Right lobe of liver (tissue), 6 donors: ENCODE measurements at regions of chr11 and their contacts with region 1.

Region 1: GRCh38 chr11:64854534-64855429 is 10.3 kb upstream of the CDC42BPG start:
- DNase-seq: peak in 1 of 3 donors; percentile 80
- ATAC-seq: peak; percentile 34 to 77 (median 52)
- H3K4me3 ChIP-seq: no peak overlapping the region
- H3K27ac ChIP-seq: peak overlapping the region in 1 of 3 donors; percentile 31
- H3K4me1 ChIP-seq: peaks cover 2 to 16% (median 6%) of the 10 kb centered on the region in 4 donors
- H3K27me3 ChIP-seq: no peaks in the 10 kb centered on the region
- CTCF ChIP-seq: no peak
- POLR2A ChIP-seq: no peak

Region 2: GRCh38 chr11:64894070-64894796 is 39.5 kb after region 1 on chr11:
- intact Hi-C with region 1: loop called in 1 of 2 experiments (anchors 5 kb)
- DNase-seq: peak; percentile 91 to 93 (median 92)
- ATAC-seq: peak; percentile 57 to 66 (median 62)
- H3K4me3 ChIP-seq: peak overlapping the region in 2 of 3 donors; percentile 91
- H3K27ac ChIP-seq: peak overlapping the region in 2 of 3 donors; percentile 90 to 95
- H3K4me1 ChIP-seq: peaks cover 0 to 30% (median 11%) of the 10 kb centered on the region in 4 donors
- H3K27me3 ChIP-seq: no peaks in the 10 kb centered on the region
- CTCF ChIP-seq: peak; percentile 87 to 93 (median 88)
- POLR2A ChIP-seq: no peak

Region 3: GRCh38 chr11:64960719-64961118 is 105.9 kb after region 1 on chr11:
- intact Hi-C with region 1: no loop called
- DNase-seq: no peak
- ATAC-seq: no peak
- H3K4me3 ChIP-seq: no peak overlapping the region
- H3K27ac ChIP-seq: no peak overlapping the region
- H3K4me1 ChIP-seq: no peaks in the 10 kb centered on the region
- H3K27me3 ChIP-seq: no peaks in the 10 kb centered on the region
- CTCF ChIP-seq: no peak
- POLR2A ChIP-seq: no peak

Region 4: GRCh38 chr11:65069217-65069616 is 214.4 kb after region 1 on chr11:
- intact Hi-C with region 1: no loop called
- DNase-seq: no peak
- ATAC-seq: no peak
- H3K4me3 ChIP-seq: no peak overlapping the region
- H3K27ac ChIP-seq: no peak overlapping the region
- H3K4me1 ChIP-seq: no peaks in the 10 kb centered on the region
- H3K27me3 ChIP-seq: no peaks in the 10 kb centered on the region
- CTCF ChIP-seq: no peak
- POLR2A ChIP-seq: no peak